T-cell (primary cell): ENCODE measurements at regions of chrX and their contacts with region 1.

Region 1: DNA sequence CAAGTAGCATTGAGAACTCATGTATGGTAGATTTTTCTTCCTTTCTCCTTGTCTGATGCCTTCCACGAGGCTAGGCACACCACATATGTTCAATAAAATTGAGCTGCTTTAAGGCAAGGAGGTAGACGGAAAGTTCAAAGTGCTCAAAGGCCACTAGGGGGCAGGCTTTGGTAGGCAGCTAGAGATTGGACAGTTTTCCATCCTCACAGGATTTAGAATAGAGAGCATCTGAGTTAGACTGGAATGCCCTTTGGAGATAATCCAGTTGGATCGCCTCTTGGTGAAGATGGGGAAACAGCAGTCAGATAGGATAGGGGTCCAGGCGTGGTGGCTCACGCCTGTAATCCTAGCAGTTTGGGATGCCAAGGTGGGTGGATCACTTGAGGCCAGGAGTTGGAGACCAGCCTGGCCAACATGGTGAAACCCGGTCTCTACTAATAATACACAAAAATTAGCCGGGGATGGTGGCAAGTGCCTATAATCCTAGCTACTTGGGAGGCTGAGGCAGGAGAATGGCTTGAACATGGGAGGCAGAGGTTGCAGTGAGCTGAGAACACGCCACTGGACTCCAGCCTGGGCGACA is 30.4 kb downstream of the ELF4 start:
- DNase-seq: peak in 31 of 35 experiments; percentile 16 to 79 (median 42)
- ATAC-seq: no peak
- H3K4me3 ChIP-seq: no peak overlapping the region
- H3K4me3 Mint-ChIP-seq: peak overlapping the region in 1 of 3 donors; percentile 40
- H3K27ac ChIP-seq: no peak overlapping the region
- H3K27ac Mint-ChIP-seq: peak overlapping the region; percentile 70 to 76
- H3K4me1 ChIP-seq: peaks cover 5 to 55% of the 10 kb centered on the region in 2 experiments
- H3K4me1 Mint-ChIP-seq: peaks cover 38 to 51% (median 45%) of the 10 kb centered on the region in 3 donors
- H3K27me3 ChIP-seq: no peaks in the 10 kb centered on the region
- H3K27me3 Mint-ChIP-seq: peaks cover 0 to 6% of the 10 kb centered on the region in 2 donors

Region 2: GRCh38 chrX:130196466-130196865 is 116.6 kb after region 1 on chrX:
- CTCF ChIA-PET with region 1: interaction called, 3 to 34 read pairs
- POLR2A ChIA-PET with region 1: interaction called in 1 of 2 experiments, 10 read pairs
- DNase-seq: no peak
- ATAC-seq: no peak
- H3K4me3 ChIP-seq: no peak overlapping the region
- H3K4me3 Mint-ChIP-seq: no peak overlapping the region
- H3K27ac ChIP-seq: no peak overlapping the region
- H3K27ac Mint-ChIP-seq: no peak overlapping the region
- H3K4me1 ChIP-seq: peaks cover 0 to 7% of the 10 kb centered on the region in 2 experiments
- H3K4me1 Mint-ChIP-seq: peaks cover 0 to 2% (median 0%) of the 10 kb centered on the region in 3 donors
- H3K27me3 ChIP-seq: no peaks in the 10 kb centered on the region
- H3K27me3 Mint-ChIP-seq: peaks cover 0 to 5% of the 10 kb centered on the region in 2 donors